WTC11 (cell line): ENCODE measurements at regions of chr7 and their contacts with region 1.

Region 1: GRCh38 chr7:322111-322671 is 32.2 kb downstream of the FOXL3 start:
- DNase-seq: peak; percentile 94
- ATAC-seq: peak; percentile 93
- H3K4me3 Mint-ChIP-seq: peak overlapping the region; percentile 43; the same call in 1 of the 2 replicates
- H3K27ac Mint-ChIP-seq: no peak overlapping the region
- H3K4me1 Mint-ChIP-seq: no peaks in the 10 kb centered on the region
- H3K27me3 Mint-ChIP-seq: peaks cover 8% of the 10 kb centered on the region
- CTCF ChIP-seq: peak; percentile 96

Region 2: GRCh38 chr7:253581-254322 is 68.4 kb before region 1 on chr7:
- CTCF ChIA-PET with region 1: no interaction called
- POLR2A ChIA-PET with region 1: no interaction called
- DNase-seq: no peak
- ATAC-seq: no peak
- H3K4me3 Mint-ChIP-seq: no peak overlapping the region
- H3K27ac Mint-ChIP-seq: no peak overlapping the region
- H3K4me1 Mint-ChIP-seq: no peaks in the 10 kb centered on the region
- H3K27me3 Mint-ChIP-seq: no peaks in the 10 kb centered on the region
- CTCF ChIP-seq: no peak

Region 3: DNA sequence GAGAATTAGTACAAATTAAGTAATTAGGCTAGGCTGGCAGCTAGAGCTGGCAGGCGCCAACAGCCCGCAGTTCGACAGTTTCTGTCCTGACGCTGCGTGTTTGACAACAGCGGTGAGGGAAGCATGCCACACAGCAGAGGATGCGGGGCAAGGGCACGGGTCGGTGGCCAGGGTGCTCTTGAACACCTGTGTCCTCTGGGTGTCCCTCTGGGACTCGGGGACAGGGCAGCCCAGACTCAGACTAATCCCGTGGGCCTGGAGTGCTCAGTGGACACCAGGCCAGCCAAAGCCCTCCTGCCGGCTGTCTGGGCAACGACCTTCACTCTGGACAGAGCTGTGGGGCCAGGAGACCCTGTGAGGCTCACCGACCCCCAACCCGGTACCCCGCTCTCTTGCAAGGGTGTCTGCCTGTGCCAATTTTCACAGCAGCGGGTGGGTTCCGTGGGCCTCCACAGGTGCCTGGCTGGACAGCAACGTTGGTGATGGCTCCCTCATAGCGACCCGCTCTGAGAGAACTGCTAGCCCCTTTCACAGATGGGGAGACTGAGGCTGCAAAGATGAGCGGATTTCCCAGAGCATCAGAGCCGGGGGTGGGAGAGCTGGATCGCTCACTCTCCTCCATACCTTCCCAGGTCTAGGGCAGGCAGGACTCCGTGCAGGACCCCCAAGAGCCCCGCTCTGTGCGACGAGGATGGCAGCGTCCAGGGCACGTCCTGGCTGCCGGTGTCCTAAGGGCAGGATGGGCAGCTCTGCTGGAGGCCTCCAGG is 16.3 kb after region 1 on chr7:
- CTCF ChIA-PET with region 1: no interaction called
- POLR2A ChIA-PET with region 1: no interaction called
- DNase-seq: no peak
- ATAC-seq: no peak
- H3K4me3 Mint-ChIP-seq: no peak overlapping the region
- H3K27ac Mint-ChIP-seq: no peak overlapping the region
- H3K4me1 Mint-ChIP-seq: 0 out of 2 replicates have a peak, but pooled peaks cover 3% of the 10 kb centered on the region
- H3K27me3 Mint-ChIP-seq: peaks cover 2% of the 10 kb centered on the region
- CTCF ChIP-seq: no peak

Region 4: DNA sequence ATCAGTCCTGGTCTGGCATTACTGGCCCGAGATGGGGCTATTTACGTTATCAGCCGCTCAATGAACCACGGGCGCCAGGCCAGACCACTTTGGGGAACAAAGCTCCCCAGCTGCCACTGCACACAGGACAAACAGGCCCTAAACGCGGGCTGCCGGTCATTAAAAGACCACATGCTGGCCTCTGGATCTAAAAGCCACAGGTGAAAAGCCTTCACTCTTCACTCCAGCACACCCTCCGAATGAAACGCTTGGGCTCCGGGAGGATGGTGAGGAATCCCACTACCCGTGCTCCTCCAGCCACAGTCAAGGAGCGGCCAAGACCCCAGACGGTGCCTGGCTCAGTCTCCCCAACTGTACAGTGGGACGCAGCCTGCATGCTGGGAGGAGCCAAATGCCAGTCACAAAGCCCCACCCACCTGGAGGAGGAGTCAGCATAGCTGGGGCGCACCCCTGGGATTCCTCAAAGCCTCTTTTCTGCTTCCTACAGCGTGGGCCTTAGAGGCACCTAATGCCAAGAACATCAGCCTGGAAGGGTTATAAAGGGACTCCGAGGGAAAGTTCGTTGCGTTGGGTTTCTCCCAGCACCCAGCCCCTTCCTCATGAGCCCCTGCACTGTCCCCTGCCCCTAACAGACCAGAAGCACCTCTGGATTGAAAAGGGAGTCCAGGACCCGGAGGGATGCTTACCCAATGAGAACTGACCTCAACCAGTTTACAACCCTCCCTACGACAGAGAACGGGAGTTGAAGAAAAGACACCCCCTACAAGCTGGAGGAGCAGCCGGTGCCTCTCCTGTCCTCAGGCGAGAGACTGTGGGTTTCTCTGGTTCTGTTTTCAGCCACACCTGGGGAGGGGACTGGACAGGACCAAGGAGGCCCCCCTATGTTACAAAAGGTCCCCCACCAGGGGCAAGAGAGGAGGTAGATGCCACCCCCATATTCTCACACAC is 192.7 kb after region 1 on chr7:
- CTCF ChIA-PET with region 1: interaction called, 11 read pairs
- POLR2A ChIA-PET with region 1: no interaction called
- DNase-seq: peak; percentile 78
- ATAC-seq: peak; percentile 41
- H3K4me3 Mint-ChIP-seq: peak overlapping the region; percentile 71
- H3K27ac Mint-ChIP-seq: peak overlapping the region; percentile 92
- H3K4me1 Mint-ChIP-seq: peaks cover 34% of the 10 kb centered on the region
- H3K27me3 Mint-ChIP-seq: peaks cover 5% of the 10 kb centered on the region
- CTCF ChIP-seq: no peak

Region 5: DNA sequence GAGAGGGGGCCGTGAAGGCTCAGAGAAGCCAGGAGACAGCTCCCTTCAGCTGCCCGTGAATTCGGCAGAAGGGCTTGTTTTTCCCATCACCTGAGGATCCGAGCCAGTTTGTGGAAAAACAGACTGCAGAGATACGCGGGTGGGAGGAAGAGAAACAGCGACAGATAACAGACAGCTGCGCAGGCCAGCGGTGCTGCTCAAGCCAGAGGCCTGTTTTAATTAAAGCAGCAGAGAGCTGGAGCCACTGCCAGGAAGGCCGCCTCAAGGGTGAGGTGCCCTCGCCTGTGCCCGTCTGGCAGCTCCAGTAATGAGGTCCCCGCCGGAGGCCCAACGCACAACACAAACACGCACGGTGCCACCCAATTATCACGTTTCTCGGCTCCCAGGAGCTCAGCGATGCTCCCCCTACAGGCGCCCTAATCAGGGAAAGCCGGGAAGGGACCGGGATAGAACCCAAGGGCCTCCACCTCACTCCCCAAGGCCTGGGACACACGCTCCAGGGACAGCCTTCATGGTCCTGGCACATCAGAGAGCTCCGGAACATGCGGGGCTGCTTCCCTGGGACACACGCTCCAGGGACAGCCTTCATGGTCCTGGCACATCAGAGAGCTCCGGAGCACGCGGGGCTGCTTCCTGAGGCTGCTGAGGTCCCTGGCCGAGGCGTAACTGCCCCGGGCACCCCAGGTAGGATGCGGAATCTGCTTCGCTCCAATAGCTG is 343.7 kb after region 1 on chr7:
- CTCF ChIA-PET with region 1: interaction called, 12 read pairs
- POLR2A ChIA-PET with region 1: no interaction called
- DNase-seq: peak; percentile 58
- ATAC-seq: peak; percentile 76
- H3K4me3 Mint-ChIP-seq: peak overlapping the region; percentile 12; the same call in 1 of the 2 replicates
- H3K27ac Mint-ChIP-seq: peak overlapping the region; percentile 94
- H3K4me1 Mint-ChIP-seq: peaks cover 32% of the 10 kb centered on the region
- H3K27me3 Mint-ChIP-seq: no peaks in the 10 kb centered on the region
- CTCF ChIP-seq: no peak

Region 6: DNA sequence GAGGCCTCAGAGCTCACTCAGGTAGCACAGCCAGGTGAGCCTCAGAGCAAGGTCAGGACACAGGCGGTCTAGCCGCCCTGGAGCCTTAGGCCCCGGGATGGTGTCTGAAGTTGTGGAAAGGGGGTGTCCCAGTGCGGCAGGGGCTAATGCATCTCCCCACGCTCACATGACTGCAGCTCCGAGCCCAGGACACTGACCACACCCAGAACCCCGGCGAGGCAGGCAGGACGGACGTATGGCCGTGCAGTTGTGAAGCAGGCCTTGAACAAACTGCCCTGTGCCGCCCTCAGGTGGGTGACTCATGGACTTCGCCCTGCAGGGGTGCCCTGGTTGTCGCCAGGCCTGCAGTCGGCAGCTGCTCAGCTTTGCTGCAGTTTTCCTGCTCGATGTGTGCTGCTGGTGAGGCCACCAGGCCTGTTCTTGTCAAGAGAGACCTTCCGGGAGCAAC is 409.9 kb after region 1 on chr7:
- CTCF ChIA-PET with region 1: interaction called, 10 read pairs
- POLR2A ChIA-PET with region 1: no interaction called
- DNase-seq: peak; percentile 54
- ATAC-seq: peak; percentile 55
- H3K4me3 Mint-ChIP-seq: no peak overlapping the region
- H3K27ac Mint-ChIP-seq: no peak overlapping the region
- H3K4me1 Mint-ChIP-seq: peaks cover 9% of the 10 kb centered on the region
- H3K27me3 Mint-ChIP-seq: no peaks in the 10 kb centered on the region
- CTCF ChIP-seq: no peak

Region 7: DNA sequence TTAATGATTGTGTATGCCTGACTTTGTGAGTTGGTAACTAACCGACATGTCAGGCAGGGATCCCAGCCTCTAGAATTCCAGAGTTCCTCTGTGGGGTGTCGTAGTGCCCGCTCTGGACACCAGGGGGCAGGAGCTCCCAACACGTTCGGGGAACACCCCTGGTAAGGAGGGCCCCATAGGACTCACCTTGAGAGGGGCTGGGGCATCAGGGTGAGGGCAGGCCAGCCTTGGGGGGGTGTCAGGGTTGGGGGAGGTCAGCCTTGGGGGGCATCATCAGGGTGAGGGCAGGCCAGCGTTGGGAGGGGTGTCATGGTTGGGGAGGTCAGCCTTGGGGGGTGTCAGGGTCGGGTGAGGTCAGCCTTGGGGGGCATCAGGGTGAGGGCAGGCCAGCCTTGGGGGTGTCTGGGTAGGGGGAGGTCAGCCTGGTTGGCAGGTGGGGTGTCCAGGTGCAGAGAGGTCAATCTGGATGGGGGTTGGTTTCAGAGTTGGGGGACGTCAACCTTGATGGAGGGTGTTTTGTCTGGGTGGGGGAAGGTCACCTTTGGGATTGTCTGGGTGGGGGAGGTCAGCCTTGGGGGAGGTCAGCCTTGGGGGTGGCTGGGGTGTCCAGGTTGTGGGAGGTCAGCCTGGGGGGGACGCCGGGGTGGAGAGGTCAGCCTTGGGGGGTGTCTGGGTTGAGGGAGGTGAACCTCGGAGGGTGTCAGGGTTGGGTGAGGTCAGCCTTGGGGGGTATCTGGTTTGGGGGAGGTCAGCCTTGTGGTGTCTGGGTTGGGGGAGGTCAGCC is 464.5 kb after region 1 on chr7:
- CTCF ChIA-PET with region 1: interaction called, 10 read pairs
- POLR2A ChIA-PET with region 1: no interaction called
- DNase-seq: peak; percentile 87
- ATAC-seq: peak; percentile 92
- H3K4me3 Mint-ChIP-seq: no peak overlapping the region
- H3K27ac Mint-ChIP-seq: no peak overlapping the region
- H3K4me1 Mint-ChIP-seq: no peaks in the 10 kb centered on the region
- H3K27me3 Mint-ChIP-seq: no peaks in the 10 kb centered on the region; the same call in 1 of the 2 replicates
- CTCF ChIP-seq: peak; percentile 86